ENCODE measurements at regions of chr20 and their contacts with region 1.

Region 1: GRCh38 chr20:34129518-34130162 is 17.6 kb upstream of the EIF2S2 start:
- DNase-seq: peak; percentile 31 to 38
- ATAC-seq: peak; percentile 86 to 87
- H3K4me3 ChIP-seq: peak overlapping the region; percentile 8 to 41 (median 16)
- H3K27ac ChIP-seq: no peak overlapping the region
- H3K4me1 ChIP-seq: peaks cover 0 to 3% of the 10 kb centered on the region in 2 donors
- H3K27me3 ChIP-seq: no peaks in the 10 kb centered on the region
- CTCF ChIP-seq: peak; percentile 81 to 87 (median 85)
- POLR2A ChIP-seq: no peak

Region 2: DNA sequence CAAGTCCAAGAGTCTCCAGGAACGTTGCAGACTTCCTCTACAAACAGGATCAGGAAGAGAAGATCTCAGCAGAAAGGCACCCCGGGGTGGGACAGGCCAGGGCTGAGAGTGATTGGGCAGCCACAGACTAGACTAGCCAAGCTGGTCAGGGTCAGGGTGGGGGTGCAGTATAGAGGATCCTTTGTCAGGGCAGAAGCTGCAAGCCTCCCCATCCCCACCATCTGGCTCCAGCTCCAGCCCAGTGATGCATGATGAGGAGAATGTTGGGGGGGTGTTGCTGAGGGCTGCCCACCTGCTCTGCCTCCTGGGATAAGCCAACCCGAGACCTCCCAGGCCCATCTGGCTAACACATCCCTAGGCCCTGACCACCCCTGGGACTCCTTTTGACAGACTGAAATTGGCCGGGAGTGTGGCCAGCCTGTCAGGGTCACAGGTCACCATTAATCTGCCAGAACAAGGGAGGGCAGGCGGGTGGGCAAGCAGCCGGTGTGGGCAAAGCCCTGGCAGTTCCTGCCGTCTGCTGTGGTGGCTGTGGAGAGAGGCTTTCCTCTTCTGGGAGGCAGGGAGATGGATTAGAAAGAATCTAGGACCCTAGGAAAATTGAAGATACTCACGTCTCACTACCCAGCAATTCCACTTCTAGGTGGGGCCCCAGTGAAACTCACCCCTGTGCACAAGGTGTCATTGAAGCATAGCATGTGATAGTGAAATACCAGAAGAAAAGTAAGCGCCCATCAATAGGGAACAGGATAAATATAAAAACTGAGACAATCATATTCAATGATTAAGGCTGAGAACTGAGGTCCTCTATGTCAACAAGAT is 663.9 kb before region 1 on chr20:
- in situ Hi-C with region 1: loop called in 2 of 4 experiments (anchors 25 kb)
- intact Hi-C with region 1: no loop called
- DNase-seq: no peak
- ATAC-seq: no peak
- H3K4me3 ChIP-seq: no peak overlapping the region
- H3K27ac ChIP-seq: no peak overlapping the region
- H3K4me1 ChIP-seq: no peaks in the 10 kb centered on the region
- H3K27me3 ChIP-seq: no peaks in the 10 kb centered on the region
- CTCF ChIP-seq: no peak
- POLR2A ChIP-seq: no peak

Region 3: GRCh38 chr20:33862709-33863403 is 266.8 kb before region 1 on chr20:
- in situ Hi-C with region 1: no loop called
- intact Hi-C with region 1: loop called (anchors 2 kb)
- DNase-seq: peak in 1 of 2 donors; percentile 15
- ATAC-seq: peak in 1 of 2 donors; percentile 36
- H3K4me3 ChIP-seq: no peak overlapping the region
- H3K27ac ChIP-seq: no peak overlapping the region
- H3K4me1 ChIP-seq: peaks cover 6 to 10% of the 10 kb centered on the region in 2 donors
- H3K27me3 ChIP-seq: no peaks in the 10 kb centered on the region
- CTCF ChIP-seq: peak; percentile 40 to 75 (median 55)
- POLR2A ChIP-seq: no peak

Region 4: DNA sequence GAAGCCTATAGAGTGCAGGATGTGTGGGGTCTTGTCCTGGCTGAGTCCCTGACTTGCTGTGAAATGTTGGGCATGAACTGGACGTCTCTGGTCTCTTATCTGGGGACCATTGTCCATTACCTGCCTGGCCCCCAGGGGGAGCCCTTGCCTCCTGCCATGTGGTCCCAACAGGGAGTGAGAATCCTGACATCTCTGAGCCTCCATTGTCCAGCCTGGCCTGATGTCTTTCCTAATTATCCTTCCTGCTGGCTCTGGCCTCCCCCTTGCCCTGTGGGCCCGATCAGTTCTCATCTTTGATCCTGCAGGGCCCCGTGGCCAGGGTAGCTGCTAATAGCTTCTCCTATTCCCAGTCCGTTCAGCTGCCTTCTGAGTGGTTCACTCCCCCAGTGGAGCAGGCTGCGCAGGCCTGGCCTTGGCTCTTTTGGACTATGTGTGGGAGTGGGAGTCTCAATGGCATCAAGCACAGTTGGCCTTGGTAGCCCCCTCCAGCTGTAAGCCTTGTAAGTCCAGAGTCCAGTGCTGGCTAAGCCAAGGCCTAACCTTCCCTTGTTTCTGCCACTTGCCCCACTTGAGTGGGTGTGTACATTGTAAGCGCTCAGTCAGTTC is 213.8 kb before region 1 on chr20:
- in situ Hi-C with region 1: no loop called
- intact Hi-C with region 1: loop called (anchors 5 kb)
- DNase-seq: peak; percentile 4 to 40
- ATAC-seq: peak; percentile 56 to 68
- H3K4me3 ChIP-seq: no peak overlapping the region
- H3K27ac ChIP-seq: no peak overlapping the region
- H3K4me1 ChIP-seq: no peaks in the 10 kb centered on the region
- H3K27me3 ChIP-seq: no peaks in the 10 kb centered on the region
- CTCF ChIP-seq: peak; percentile 38 to 76 (median 65)
- POLR2A ChIP-seq: no peak

Region 5: DNA sequence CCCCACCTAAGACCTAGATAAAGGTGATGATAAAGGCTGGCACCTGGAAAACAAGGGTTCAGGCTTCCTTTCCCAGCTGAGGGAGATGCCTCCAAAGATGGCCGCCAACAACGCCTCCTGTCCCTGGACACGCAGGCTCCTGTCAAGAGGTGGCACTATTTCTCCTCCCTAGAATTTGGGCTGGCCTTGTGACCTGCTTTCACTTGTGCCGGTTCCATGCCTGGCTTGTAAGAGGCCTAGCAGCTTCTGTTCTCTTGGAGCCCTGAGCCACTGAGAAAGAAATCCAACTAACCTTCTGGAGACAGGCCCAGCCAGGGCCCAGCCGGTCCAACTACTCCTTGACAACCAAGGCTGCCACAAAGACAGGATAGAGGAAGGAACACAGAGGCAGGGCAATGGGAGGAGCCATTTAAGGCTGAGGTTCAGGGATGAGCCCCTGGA is 196.2 kb before region 1 on chr20:
- in situ Hi-C with region 1: no loop called
- intact Hi-C with region 1: loop called (anchors 2 kb)
- DNase-seq: peak; percentile 60 to 75
- ATAC-seq: peak; percentile 93 to 98
- H3K4me3 ChIP-seq: no peak overlapping the region
- H3K27ac ChIP-seq: peak overlapping the region; percentile 31 to 72 (median 46)
- H3K4me1 ChIP-seq: no peaks in the 10 kb centered on the region
- H3K27me3 ChIP-seq: no peaks in the 10 kb centered on the region
- CTCF ChIP-seq: peak in 4 of 5 experiments; percentile 47 to 58 (median 52)
- POLR2A ChIP-seq: no peak

Measured in gastrocnemius medialis (tissue), 4 donors.